ENCODE measurements at regions of chr22 and their contacts with region 1.

Region 1: DNA sequence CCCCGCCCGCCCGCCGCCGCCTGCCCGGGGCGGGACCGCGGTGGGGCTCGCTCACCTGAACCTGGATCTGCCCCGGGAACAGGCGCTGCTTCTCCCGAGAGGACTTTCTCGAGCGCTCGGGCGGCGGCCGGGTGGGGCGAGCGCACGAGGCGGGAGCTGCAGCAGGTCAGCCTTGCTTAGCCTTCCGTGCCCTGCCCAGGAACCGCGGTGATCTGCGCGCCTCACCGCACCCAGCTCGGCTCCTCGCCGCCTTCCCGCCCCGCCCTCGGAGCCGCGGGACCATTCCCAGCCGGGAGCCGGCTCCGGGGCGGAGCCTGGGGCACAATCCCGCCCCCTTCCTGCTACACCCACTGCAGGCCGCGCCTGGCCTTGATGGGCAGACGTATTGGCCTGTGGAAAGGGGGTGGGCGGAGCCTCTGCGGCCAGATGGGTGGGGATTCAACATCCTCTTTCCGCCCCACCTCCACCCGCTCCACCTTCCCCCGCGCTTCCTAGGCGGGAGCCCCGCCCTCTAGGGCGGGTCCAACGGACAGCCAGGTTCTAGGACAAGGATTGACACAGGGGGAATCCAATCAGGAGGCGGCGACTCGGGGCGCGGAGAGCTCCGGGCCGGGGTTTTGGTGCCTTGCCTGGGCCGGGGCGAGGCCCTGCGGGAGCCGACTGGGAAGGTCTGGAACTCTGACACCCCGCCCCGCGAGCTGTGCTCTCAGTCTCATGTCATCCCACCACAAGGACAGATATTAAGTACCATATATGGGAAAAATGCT is at the start of gene MYH9:
- DNase-seq: peak; percentile 100
- ATAC-seq: peak; percentile 90
- H3K4me3 ChIP-seq: peak within 1 kb of the TSS; percentile 75
- H3K27ac ChIP-seq: peak within 1 kb of the TSS; percentile 97
- H3K4me1 ChIP-seq: peaks cover 9% of the 10 kb centered on the region
- H3K27me3 ChIP-seq: no peaks in the 10 kb centered on the region
- CTCF ChIP-seq: no peak
- POLR2A ChIP-seq: peak; percentile 98
- RAD21 ChIP-seq: no peak; the same call in 1 of the 2 replicates
- total RNA-seq, gene MYH9: 554 and 783 TPM in 2 replicates

Region 2: DNA sequence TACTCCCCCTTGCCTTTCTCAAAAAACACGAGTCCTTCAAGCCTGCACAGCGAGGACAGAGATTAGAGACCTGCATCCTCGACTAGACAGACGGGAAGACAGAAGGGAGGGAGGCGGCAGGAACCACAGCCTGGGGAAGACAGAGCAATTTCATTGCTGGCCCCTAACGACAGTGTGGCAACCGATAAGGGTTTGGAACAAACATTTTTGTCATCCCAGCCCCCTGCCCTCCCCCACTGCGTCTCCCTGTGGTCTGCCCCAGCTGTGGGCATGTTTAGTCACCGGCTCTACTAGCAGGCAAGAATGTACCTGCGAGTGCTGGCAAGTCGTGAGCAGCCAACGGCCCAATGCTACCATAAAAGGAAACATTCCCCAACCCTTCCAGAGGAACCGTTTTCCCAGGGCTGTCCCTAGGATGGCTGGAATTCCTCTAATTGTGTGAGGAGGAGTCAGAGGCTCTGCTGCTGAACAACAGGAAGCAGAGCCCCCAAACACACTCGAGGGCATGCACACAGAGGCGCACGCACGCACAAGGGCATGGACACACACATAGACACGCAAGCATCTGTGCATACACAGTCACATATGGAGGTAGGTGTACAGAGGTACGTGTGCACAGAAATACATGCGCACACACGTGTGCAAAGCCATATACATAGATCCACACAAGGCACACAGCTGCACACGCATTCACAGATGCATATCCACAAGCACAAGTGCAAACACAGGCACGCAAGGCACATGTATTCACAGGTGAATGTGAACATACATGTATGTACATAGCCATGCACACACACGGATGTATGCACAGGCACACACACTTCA is 58.5 kb before region 1 on chr22:
- CTCF ChIA-PET with region 1: no interaction called
- POLR2A ChIA-PET with region 1: interaction called, 7 read pairs
- dilution Hi-C with region 1: no loop called
- in situ Hi-C with region 1: no loop called
- intact Hi-C with region 1: loop called (anchors 1 kb)
- DNase-seq: peak; percentile 97
- ATAC-seq: peak; percentile 50
- H3K4me3 ChIP-seq: no peak overlapping the region
- H3K27ac ChIP-seq: peak overlapping the region; percentile 87
- H3K4me1 ChIP-seq: peaks cover 77% of the 10 kb centered on the region
- H3K27me3 ChIP-seq: no peaks in the 10 kb centered on the region
- CTCF ChIP-seq: no peak
- POLR2A ChIP-seq: peak; percentile 14; the same call in 1 of the 2 replicates
- RAD21 ChIP-seq: peak; percentile 22

Region 3: DNA sequence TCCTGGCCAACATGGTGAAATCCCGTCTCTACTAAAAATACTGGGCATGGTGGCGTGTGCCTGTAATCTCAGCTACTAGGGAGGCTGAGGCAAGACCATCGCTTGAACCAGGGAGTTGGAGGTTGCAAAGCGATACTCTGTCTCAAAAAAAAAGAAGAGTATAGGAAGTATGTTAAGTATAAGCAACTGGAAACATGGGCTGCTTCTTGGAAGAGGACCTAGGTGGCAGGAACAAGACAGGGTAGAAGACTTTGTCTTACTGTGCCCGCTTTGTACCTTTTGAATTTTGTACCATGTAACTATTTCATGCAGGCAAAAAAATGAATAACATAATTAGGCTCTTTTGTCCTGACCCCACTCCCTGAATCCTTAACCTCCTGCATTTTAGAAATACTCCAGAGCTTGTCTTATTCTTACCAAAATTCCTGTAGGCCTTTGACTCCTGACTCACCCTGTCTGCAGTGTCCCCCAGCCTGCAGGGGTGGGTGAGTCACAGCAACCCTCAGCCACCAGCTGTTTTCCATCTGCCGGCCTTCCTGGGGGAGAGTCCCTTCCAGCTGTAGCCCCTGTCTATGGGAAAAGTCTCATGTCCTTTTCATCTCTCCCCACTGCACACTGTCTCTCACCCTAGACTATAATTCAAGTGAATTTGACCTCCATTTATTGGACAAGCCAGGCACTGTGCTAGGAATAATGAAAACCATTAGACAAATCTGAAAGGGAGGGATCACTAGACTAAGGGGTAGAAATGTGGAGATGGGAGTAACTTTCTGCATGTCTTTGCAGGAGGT is 51.7 kb after region 1 on chr22:
- CTCF ChIA-PET with region 1: no interaction called
- POLR2A ChIA-PET with region 1: interaction called, 14 read pairs
- dilution Hi-C with region 1: no loop called
- in situ Hi-C with region 1: no loop called
- intact Hi-C with region 1: no loop called
- DNase-seq: peak; percentile 97
- ATAC-seq: peak; percentile 94
- H3K4me3 ChIP-seq: no peak overlapping the region
- H3K27ac ChIP-seq: peak overlapping the region; percentile 76
- H3K4me1 ChIP-seq: peaks cover 19% of the 10 kb centered on the region
- H3K27me3 ChIP-seq: no peaks in the 10 kb centered on the region
- CTCF ChIP-seq: no peak
- POLR2A ChIP-seq: no peak
- RAD21 ChIP-seq: no peak

Region 4: GRCh38 chr22:36453929-36454328 is 66.0 kb after region 1 on chr22:
- CTCF ChIA-PET with region 1: no interaction called
- POLR2A ChIA-PET with region 1: interaction called, 12 read pairs
- dilution Hi-C with region 1: no loop called
- in situ Hi-C with region 1: no loop called
- intact Hi-C with region 1: no loop called
- DNase-seq: no peak
- ATAC-seq: no peak
- H3K4me3 ChIP-seq: no peak overlapping the region
- H3K27ac ChIP-seq: no peak overlapping the region
- H3K4me1 ChIP-seq: peaks cover 18% of the 10 kb centered on the region
- H3K27me3 ChIP-seq: no peaks in the 10 kb centered on the region
- CTCF ChIP-seq: no peak
- POLR2A ChIP-seq: no peak
- RAD21 ChIP-seq: no peak

Region 5: DNA sequence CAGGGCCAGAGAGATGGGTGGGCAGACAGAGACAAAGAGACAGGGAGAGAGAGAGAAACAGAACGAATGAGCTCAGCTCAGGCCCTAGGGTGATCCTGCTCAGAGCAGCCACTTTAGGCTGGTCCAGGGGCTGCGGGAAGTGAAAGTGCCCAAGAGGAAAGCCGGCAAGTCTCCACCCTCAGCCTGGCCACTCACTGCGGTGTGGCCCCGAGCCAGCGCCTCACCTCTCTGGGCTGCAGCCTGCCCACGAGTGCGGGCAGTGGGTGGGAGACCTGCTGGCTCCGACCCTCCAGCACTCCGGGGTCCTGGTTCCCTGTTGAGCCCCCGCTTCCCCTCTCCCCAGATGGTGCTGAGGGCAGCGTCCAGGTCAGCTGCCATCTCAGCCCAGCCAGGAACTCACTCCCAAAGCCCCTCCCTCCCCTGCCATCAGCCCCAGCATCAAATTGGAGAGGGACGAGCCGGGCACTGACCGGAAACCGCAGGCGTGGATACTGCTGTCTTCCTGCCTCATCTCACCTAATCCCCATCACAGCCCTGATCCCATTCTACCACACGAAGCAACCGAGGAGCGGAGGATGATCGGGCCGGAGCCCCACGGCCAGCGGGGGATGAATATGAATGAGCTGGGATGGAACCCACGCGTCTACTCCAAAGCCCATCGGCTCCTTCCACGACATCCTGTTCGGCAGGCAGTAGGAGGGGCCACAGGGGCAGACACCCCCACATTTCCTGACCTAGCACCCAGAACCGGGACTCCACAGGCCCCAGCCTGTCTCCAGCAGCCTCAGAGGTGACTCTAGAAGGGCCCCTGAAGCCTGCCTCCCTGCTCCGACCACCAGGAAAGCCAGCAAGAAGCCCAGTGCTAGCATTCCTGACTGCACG is 1022.5 kb after region 1 on chr22:
- CTCF ChIA-PET with region 1: no interaction called
- POLR2A ChIA-PET with region 1: no interaction called
- dilution Hi-C with region 1: no loop called
- in situ Hi-C with region 1: no loop called
- intact Hi-C with region 1: no loop called
- DNase-seq: no peak
- ATAC-seq: no peak
- H3K4me3 ChIP-seq: no peak overlapping the region
- H3K27ac ChIP-seq: no peak overlapping the region
- H3K4me1 ChIP-seq: no peaks in the 10 kb centered on the region
- H3K27me3 ChIP-seq: no peaks in the 10 kb centered on the region; the same call in 1 of the 2 replicates
- CTCF ChIP-seq: no peak
- POLR2A ChIP-seq: no peak
- RAD21 ChIP-seq: no peak

Measured in IMR-90 (cell line).